ENCODE measurements at regions of chr21 and their contacts with region 1.

Region 1: DNA sequence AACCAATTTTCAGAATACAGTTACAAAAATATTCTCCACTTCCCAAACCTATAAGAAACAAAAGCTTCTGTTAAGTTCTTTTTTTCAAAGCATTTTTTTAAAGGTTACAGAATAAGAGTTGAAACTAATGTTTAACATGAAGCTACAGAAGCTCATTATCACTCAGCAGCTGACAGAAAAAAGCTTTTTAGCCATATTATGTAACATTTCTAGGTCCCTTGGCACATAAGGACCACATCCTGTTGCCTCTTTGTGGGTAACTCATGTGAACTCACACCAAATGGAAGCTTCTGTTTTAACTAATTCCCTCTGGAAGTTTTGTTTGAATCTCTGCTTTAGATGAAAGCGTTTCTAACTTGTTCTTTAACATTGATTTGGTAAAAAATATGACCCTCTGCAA is 242.5 kb upstream of the TMPRSS15 start:
- DNase-seq: no peak
- ATAC-seq: no peak
- H3K4me3 ChIP-seq: no peak overlapping the region
- H3K4me3 Mint-ChIP-seq: no peak overlapping the region
- H3K27ac ChIP-seq: no peak overlapping the region
- H3K27ac Mint-ChIP-seq: no peak overlapping the region
- H3K4me1 ChIP-seq: no peaks in the 10 kb centered on the region
- H3K4me1 Mint-ChIP-seq: no peaks in the 10 kb centered on the region
- H3K27me3 ChIP-seq: no peaks in the 10 kb centered on the region
- H3K27me3 Mint-ChIP-seq: no peaks in the 10 kb centered on the region

Region 2: DNA sequence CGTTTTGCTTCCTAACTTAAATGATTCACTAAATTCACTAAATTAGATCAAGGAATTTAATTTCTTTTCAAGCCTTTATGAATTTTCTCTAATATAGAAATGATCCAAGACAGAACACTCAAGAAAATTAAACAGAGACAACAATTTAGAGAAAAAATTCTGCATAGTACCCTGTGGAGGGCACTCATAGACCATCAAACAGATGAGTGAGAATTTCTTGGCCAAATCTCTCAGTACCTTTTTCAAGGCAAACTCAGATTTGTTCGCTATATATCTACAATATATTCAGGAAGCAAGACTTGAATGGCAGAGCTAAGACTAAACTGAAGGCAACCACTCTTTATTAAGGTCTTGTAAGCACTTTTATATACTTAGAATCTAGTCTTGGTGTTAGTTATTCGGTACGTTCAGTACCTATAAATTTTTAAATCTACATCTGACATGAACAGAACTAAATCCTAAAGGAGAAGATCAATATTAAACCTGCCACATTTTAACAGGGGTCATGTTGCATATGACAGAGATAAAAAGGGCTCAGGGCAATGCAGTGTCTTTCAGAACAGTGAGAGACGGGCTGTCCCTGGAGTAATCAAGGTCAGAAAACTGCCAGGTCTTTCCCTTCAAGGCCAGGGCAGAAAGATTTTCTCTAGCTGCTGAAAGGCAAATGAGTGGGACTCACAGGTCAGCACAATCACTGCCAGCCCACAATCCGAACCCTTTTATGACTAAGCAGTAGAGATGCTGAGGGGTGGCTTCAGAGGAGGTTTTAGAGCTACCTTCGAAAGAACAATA is 123.7 kb before region 1 on chr21:
- CTCF ChIA-PET with region 1: no interaction called
- POLR2A ChIA-PET with region 1: no interaction called
- intact Hi-C with region 1: no loop called
- DNase-seq: no peak
- ATAC-seq: no peak
- H3K4me3 ChIP-seq: no peak overlapping the region
- H3K4me3 Mint-ChIP-seq: no peak overlapping the region
- H3K27ac ChIP-seq: no peak overlapping the region
- H3K27ac Mint-ChIP-seq: no peak overlapping the region
- H3K4me1 ChIP-seq: no peaks in the 10 kb centered on the region
- H3K4me1 Mint-ChIP-seq: no peaks in the 10 kb centered on the region
- H3K27me3 ChIP-seq: no peaks in the 10 kb centered on the region
- H3K27me3 Mint-ChIP-seq: no peaks in the 10 kb centered on the region

Region 3: DNA sequence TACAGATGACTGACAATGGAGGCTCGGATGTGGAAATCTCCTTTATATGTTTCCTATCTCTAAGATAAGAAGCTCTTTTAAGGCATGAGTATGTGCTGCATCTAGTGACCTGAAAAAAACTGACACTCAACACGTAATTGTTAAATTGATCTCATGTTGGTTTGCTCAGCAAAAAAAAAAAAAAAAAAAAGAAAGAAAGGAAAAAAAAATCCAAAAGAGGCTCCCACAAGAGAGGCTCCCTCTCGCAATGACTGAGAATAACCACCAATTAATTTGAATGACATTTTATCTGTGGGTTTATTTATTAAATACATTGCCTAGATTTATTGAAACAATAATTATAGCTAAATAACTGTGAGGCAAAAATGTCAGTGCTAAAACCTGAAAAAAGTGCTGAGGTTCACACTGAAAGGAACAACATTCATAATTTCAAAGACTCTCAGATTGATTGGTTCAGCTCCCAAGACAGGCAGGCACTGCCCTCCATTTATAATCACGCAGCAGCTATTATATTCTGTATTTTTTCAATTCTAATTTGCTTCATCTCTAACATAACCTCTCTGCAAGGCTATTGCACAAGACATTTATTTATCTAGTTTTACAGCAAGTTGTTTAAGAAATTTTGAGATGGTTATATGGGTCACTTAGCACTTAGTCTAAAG is 58.0 kb before region 1 on chr21:
- CTCF ChIA-PET with region 1: no interaction called
- POLR2A ChIA-PET with region 1: no interaction called
- intact Hi-C with region 1: loop called in 1 of 2 experiments (anchors 10 kb)
- DNase-seq: no peak
- ATAC-seq: no peak
- H3K4me3 ChIP-seq: no peak overlapping the region
- H3K4me3 Mint-ChIP-seq: no peak overlapping the region
- H3K27ac ChIP-seq: no peak overlapping the region
- H3K27ac Mint-ChIP-seq: no peak overlapping the region
- H3K4me1 ChIP-seq: no peaks in the 10 kb centered on the region
- H3K4me1 Mint-ChIP-seq: no peaks in the 10 kb centered on the region
- H3K27me3 ChIP-seq: no peaks in the 10 kb centered on the region
- H3K27me3 Mint-ChIP-seq: no peaks in the 10 kb centered on the region

Region 4: DNA sequence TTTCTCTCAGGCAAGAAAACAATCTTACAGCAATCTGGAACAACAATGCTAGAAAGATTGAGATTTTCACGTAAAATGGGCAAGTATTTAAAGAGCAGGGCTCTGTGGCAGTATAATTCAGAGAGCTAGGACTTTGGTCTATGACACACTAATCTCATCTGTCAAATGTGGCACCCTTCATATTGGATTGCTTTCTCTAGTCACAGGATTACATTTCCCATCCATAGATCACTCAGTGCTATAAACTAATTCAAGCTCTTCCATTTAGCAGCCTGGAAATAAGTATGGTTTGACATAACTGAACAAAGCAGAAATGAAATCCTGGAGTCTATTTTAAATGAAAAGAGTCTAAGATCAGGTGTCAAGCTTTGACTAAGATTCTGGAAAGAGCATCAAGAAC is 20.6 kb after region 1 on chr21:
- CTCF ChIA-PET with region 1: no interaction called
- POLR2A ChIA-PET with region 1: no interaction called
- intact Hi-C with region 1: no loop called
- DNase-seq: no peak
- ATAC-seq: no peak
- H3K4me3 ChIP-seq: no peak overlapping the region
- H3K4me3 Mint-ChIP-seq: no peak overlapping the region
- H3K27ac ChIP-seq: no peak overlapping the region
- H3K27ac Mint-ChIP-seq: no peak overlapping the region
- H3K4me1 ChIP-seq: no peaks in the 10 kb centered on the region
- H3K4me1 Mint-ChIP-seq: no peaks in the 10 kb centered on the region
- H3K27me3 ChIP-seq: no peaks in the 10 kb centered on the region
- H3K27me3 Mint-ChIP-seq: no peaks in the 10 kb centered on the region

Region 5: GRCh38 chr21:18899261-18899660 is 253.1 kb after region 1 on chr21:
- CTCF ChIA-PET with region 1: no interaction called
- POLR2A ChIA-PET with region 1: no interaction called
- intact Hi-C with region 1: no loop called
- DNase-seq: no peak
- ATAC-seq: no peak
- H3K4me3 ChIP-seq: no peak overlapping the region
- H3K4me3 Mint-ChIP-seq: no peak overlapping the region
- H3K27ac ChIP-seq: no peak overlapping the region
- H3K27ac Mint-ChIP-seq: no peak overlapping the region
- H3K4me1 ChIP-seq: no peaks in the 10 kb centered on the region
- H3K4me1 Mint-ChIP-seq: no peaks in the 10 kb centered on the region
- H3K27me3 ChIP-seq: no peaks in the 10 kb centered on the region
- H3K27me3 Mint-ChIP-seq: no peaks in the 10 kb centered on the region

Measured in naive thymus-derived CD4-positive, alpha-beta T cell (primary cell).